Activated CD4-positive, alpha-beta memory T cell treated with anti-CD3 and anti-CD28 coated beads for 36 hours (primary cell): ENCODE measurements at regions of chr16 and their contacts with region 1.

Region 1: DNA sequence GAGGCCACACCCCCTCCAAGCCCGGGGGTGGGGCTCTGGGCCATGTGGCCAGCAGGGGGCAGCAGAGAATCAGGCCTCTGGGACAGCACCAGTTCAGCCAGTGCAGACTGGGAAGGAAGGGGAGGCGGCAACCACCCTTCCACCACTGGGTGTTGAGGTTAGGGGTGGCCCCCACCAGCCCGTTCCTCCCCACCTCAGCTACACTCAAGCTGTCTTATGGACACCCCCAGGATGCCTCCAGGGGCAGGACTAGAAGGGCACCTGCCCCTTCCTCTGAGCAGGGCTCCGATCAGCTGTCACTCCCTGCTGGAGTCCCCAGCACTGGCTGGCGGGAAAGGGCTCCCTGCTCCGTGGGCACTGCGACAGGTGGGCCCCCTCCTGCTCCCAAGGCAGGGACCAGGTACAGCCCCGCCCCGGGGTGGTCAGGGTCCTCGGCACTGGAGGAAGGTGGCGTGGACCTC is 21.8 kb downstream of the KATNB1 start:
- DNase-seq: peak; percentile 93
- H3K4me3 Mint-ChIP-seq: no peak overlapping the region
- H3K27ac Mint-ChIP-seq: no peak overlapping the region
- H3K4me1 Mint-ChIP-seq: peaks cover 6% of the 10 kb centered on the region
- H3K27me3 Mint-ChIP-seq: no peaks in the 10 kb centered on the region

Region 2: GRCh38 chr16:57863434-57864160 is 106.2 kb after region 1 on chr16:
- CTCF ChIA-PET with region 1: interaction called, 3 read pairs
- POLR2A ChIA-PET with region 1: no interaction called
- intact Hi-C with region 1: loop called (anchors 10 kb)
- DNase-seq: peak; percentile 16
- H3K4me3 Mint-ChIP-seq: no peak overlapping the region
- H3K27ac Mint-ChIP-seq: no peak overlapping the region
- H3K4me1 Mint-ChIP-seq: no peaks in the 10 kb centered on the region
- H3K27me3 Mint-ChIP-seq: peaks cover 14% of the 10 kb centered on the region